ENCODE measurements at regions of chr9 and their contacts with region 1.

Region 1: DNA sequence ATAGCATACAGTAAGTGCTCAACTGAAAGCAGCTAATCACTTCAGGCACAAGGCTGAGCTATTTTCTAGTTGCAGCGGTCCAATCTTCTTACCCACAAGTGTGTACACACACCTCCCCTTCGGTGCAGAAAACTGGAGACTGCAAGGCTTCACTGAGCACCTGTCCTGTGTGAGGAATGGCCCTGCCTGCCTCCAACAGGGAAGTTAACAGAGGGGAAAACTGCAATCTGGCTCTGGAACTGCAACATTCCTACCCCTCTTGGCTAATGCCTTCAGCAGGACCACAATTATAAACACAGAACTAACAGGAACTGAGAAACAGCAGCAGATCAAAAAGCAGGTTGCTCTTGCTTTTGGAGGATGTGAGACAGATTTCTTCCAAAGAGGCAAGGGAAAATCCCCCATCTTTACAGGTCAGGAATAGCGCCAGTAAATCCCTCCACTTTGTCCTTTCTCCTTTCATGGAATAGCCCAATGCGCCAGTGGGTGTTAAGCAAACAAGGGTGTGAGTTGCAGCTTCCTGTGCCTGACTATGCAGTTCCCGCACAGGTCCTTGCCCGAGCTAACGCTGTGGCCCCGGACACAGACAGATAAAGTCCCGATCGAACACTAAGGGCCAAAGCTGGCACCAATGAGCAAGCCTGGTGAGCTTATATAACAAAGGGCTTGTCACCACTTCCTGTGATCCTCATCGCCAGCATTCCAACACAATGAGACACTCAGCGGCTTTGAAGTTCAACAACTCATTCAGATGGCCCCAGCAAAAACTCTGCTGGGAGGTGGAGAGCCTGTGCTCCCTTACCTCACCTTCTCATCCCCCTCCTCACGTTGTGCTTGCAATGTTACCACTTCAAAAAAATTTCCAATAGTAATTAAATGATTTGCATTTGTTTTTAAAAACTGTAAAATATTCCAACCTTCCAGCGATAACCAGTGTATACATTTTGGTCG is 21.5 kb downstream of the SHB start:
- DNase-seq: peak; percentile 58 to 73 (median 66)
- ATAC-seq: peak; percentile 77
- H3K4me3 ChIP-seq: no peak overlapping the region
- H3K27ac ChIP-seq: peak overlapping the region; percentile 63
- H3K4me1 ChIP-seq: peaks cover 29 to 30% of the 10 kb centered on the region in 2 experiments
- H3K27me3 ChIP-seq: no peaks in the 10 kb centered on the region
- CTCF ChIP-seq: no peak
- EP300 ChIP-seq: no peak; the same call in 1 of the 2 replicates
- POLR2A ChIP-seq: no peak
- RAD21 ChIP-seq: no peak

Region 2: DNA sequence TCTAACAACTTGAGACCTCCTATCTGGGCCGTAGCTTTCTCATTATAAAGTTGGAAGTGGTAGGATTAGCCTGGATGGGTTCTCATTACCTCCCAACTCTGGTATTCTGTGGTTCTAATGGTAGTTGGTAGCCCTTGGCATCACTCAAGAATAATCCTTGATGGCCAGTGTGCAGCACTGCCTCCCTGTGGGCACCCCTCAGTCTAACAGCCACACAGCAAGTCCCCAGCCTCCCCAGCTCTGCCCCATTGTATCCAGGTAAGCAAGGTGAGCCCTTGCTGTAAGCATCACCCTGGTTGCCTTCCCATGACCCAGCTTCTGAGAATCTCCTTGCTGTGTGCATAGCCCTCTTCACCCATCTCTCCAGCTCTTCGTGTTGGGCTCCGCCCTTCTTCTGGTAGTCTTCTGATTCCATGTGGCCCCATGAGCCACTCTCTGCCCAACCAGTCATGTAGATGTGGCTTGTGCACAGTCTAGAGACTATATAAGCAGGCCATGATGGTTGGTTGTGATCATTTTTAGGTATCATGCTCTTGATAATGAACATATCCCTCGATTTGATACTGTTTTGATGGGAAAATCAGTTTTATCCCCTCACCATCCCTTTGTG is 682.7 kb before region 1 on chr9:
- CTCF ChIA-PET with region 1: no interaction called
- POLR2A ChIA-PET with region 1: no interaction called
- in situ Hi-C with region 1: no loop called
- intact Hi-C with region 1: no loop called
- DNase-seq: peak in 1 of 4 experiments; percentile 31
- ATAC-seq: peak; percentile 64
- H3K4me3 ChIP-seq: no peak overlapping the region
- H3K27ac ChIP-seq: no peak overlapping the region
- H3K4me1 ChIP-seq: peaks cover 0 to 9% of the 10 kb centered on the region in 2 experiments; a peak in 2 of 5 replicates
- H3K27me3 ChIP-seq: no peaks in the 10 kb centered on the region
- CTCF ChIP-seq: peak; percentile 36 to 47 (median 42); a peak in 5 of 6 replicates
- EP300 ChIP-seq: no peak
- POLR2A ChIP-seq: no peak
- RAD21 ChIP-seq: peak in 1 of 2 experiments; percentile 42; a peak in 2 of 4 replicates

Region 3: DNA sequence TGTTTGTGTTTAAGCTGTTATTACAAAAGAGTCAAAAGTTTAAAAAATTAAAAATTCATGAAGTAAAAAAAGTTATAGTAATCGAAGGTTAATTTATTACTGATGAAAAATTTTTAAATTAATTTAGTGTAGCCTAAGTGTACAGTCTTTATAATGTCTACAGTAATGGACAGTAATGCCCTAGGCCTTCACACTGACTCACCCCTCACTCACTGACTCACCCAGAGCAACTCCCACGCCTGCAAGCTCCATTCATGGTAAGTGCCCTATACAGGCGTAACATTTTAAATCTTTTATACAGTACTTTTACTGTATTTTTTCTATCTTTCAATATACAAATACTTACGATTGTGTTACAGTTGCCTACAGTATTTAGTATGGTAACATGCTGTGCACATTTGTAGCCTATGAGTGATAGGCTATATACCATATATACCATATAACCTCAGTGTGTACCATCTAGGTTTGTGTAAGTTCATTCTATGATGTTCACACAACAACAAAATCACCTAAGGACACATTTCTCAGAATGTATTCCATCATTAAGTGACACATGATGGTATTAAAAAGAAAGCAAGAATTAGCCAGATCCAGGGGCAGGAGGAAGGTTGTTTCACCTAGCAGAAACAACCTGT is 206.9 kb before region 1 on chr9:
- CTCF ChIA-PET with region 1: no interaction called
- POLR2A ChIA-PET with region 1: no interaction called
- in situ Hi-C with region 1: no loop called
- intact Hi-C with region 1: loop called (anchors 5 kb)
- DNase-seq: peak in 3 of 4 experiments; percentile 34 to 89 (median 41)
- ATAC-seq: peak; percentile 92
- H3K4me3 ChIP-seq: no peak overlapping the region
- H3K27ac ChIP-seq: peak overlapping the region; percentile 87
- H3K4me1 ChIP-seq: peaks cover 14 to 20% of the 10 kb centered on the region in 2 experiments
- H3K27me3 ChIP-seq: no peaks in the 10 kb centered on the region
- CTCF ChIP-seq: no peak
- EP300 ChIP-seq: peak; percentile 70
- POLR2A ChIP-seq: no peak
- RAD21 ChIP-seq: no peak

Region 4: GRCh38 chr9:37994639-37995347 is 52.8 kb before region 1 on chr9:
- CTCF ChIA-PET with region 1: no interaction called
- POLR2A ChIA-PET with region 1: interaction called, 3 read pairs
- in situ Hi-C with region 1: no loop called
- intact Hi-C with region 1: loop called (anchors 5 kb)
- DNase-seq: no peak
- ATAC-seq: peak; percentile 8; the same call in 1 of the 3 replicates
- H3K4me3 ChIP-seq: no peak overlapping the region
- H3K27ac ChIP-seq: no peak overlapping the region
- H3K4me1 ChIP-seq: peaks cover 30 to 33% of the 10 kb centered on the region in 2 experiments
- H3K27me3 ChIP-seq: no peaks in the 10 kb centered on the region
- CTCF ChIP-seq: no peak
- EP300 ChIP-seq: no peak
- POLR2A ChIP-seq: no peak
- RAD21 ChIP-seq: no peak

Region 5: GRCh38 chr9:38061326-38061977 is 13.9 kb after region 1 on chr9:
- CTCF ChIA-PET with region 1: no interaction called
- POLR2A ChIA-PET with region 1: interaction called, 45 read pairs
- in situ Hi-C with region 1: no loop called
- intact Hi-C with region 1: loop called (anchors 2 kb)
- DNase-seq: no peak
- ATAC-seq: no peak
- H3K4me3 ChIP-seq: no peak overlapping the region
- H3K27ac ChIP-seq: no peak overlapping the region
- H3K4me1 ChIP-seq: peaks cover 38 to 53% of the 10 kb centered on the region in 2 experiments
- H3K27me3 ChIP-seq: no peaks in the 10 kb centered on the region; a peak in 1 of 5 replicates
- CTCF ChIP-seq: no peak
- EP300 ChIP-seq: no peak
- POLR2A ChIP-seq: no peak
- RAD21 ChIP-seq: no peak